ENCODE measurements at regions of chr10 and their contacts with region 1.

Region 1: DNA sequence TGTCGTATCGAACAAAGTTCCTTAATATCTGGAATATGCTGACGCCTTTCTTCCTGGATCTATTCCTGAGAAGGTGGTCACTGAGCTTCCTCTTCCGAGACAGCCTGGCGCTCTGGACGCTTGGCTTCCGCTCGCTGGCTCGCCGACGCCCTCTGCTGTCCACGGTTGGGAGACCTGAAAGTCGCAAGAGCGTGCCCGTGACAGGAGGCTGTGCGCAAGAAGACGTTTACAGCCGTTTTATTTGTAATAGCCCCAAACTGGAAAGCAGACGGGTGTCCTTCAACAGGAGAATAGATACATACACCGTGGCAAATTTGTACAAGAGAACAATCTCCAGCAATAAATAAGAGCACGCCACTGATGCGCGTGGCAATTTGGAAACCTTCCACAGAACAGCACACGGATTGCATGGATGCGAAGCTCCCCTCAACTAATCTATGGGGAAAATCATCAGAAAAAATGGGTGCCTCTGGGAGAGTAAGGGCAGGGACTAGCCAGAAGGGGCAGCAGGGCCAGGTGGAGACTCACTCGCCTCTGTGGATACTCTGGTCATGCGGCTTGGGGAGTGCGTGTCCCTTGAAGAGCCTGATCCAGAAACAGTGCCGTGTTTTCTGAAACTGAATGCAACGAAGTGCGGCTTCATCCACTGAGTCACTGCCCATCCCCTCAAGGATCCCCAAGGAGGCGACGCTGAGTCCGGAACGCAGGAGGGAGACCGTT is 41.5 kb upstream of the BNIP3 start:
- DNase-seq: peak; percentile 47
- H3K4me3 ChIP-seq: peak overlapping the region; percentile 48
- H3K27ac ChIP-seq: no peak overlapping the region
- H3K27me3 ChIP-seq: peaks cover 12% of the 10 kb centered on the region
- CTCF ChIP-seq: peak; percentile 97

Region 2: DNA sequence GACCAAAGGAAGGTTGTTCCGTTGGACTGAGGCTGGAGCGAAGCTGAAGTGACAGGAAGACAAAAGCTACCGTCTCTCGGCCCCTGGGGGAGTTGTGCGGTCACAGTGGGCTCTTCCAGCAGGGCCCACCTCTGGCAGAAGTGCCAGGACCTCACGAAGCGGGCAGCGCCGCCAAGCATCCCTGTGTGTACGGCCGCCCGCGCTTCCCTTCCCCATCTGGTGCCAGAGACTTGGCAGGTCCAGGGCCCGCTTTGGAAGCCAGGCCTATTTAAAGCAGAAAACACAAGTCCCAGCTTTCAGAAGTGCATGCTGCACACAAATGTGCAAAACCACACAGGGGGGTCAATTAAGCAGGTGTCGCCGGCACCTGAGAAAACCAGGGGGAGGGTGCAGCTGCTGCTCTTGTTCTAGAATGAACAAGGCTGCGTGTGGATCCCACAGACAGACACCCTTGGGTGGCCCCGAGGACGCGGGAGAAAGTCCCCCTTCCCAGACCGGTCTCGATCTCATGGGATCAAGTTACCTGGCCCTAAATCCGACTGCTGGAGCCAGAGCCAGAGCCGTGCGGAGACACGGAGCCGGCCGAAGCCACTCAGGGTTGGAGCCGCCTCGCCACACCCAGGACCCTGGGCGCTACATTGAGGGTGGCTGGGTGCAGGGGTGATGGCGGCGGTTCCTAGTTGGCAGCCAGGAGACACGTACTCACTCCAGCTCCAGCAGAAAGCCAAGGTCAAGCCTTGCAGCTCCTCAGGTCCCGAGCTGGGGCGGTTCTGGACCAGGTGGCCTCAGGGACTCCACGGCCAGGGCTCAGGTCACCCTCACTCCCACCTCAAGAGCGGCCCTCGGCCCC is 174.3 kb before region 1 on chr10:
- CTCF ChIA-PET with region 1: no interaction called
- POLR2A ChIA-PET with region 1: no interaction called
- DNase-seq: no peak
- H3K4me3 ChIP-seq: no peak overlapping the region
- H3K27ac ChIP-seq: no peak overlapping the region
- H3K27me3 ChIP-seq: no peaks in the 10 kb centered on the region
- CTCF ChIP-seq: no peak

Region 3: GRCh38 chr10:131885391-131886161 is 137.7 kb before region 1 on chr10:
- CTCF ChIA-PET with region 1: interaction called, 120 read pairs
- POLR2A ChIA-PET with region 1: interaction called, 6 read pairs
- DNase-seq: peak; percentile 13
- H3K4me3 ChIP-seq: no peak overlapping the region
- H3K27ac ChIP-seq: no peak overlapping the region
- H3K27me3 ChIP-seq: no peaks in the 10 kb centered on the region
- CTCF ChIP-seq: peak; percentile 93

Region 4: DNA sequence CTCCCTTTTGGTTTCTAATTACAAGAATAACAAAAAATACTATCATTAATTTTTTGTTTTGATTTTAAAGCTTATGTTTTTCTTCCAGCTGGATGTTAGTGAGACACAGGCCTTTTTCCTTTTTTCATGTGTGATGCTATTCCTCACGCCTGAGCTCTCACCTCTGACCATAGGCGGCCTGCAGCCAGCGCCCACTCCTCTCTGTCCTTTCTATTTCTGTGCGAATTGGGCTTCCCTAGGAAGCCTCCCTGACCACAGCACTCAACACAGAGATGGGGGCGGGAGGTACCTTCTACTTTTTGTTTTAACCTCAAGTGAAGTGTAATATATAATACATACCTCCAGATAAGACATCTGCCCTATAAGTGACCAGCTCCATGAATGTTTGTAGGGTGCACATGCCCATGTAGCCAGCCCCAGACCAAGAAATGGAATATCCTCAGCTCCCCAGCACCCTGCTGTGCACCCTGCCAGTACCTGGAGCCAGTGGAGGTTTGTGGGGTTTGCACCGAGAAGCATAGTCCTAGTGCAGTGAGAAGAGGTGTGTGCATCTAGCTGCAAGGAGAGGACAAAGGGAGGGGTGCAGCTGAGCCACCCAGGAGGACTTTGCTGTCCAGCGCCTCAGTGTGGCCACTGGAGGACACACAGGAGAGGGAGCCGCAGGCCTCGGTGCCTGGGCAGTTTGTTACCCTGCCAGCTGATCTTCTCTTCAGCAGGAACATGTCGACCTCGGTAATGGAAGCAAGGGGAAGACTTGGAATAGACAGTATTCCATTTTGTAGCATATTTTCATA is 80.0 kb before region 1 on chr10:
- CTCF ChIA-PET with region 1: interaction called, 20 read pairs
- POLR2A ChIA-PET with region 1: no interaction called
- DNase-seq: no peak
- H3K4me3 ChIP-seq: no peak overlapping the region
- H3K27ac ChIP-seq: no peak overlapping the region
- H3K27me3 ChIP-seq: no peaks in the 10 kb centered on the region
- CTCF ChIP-seq: peak; percentile 28; the same call in 1 of the 2 replicates

Region 5: DNA sequence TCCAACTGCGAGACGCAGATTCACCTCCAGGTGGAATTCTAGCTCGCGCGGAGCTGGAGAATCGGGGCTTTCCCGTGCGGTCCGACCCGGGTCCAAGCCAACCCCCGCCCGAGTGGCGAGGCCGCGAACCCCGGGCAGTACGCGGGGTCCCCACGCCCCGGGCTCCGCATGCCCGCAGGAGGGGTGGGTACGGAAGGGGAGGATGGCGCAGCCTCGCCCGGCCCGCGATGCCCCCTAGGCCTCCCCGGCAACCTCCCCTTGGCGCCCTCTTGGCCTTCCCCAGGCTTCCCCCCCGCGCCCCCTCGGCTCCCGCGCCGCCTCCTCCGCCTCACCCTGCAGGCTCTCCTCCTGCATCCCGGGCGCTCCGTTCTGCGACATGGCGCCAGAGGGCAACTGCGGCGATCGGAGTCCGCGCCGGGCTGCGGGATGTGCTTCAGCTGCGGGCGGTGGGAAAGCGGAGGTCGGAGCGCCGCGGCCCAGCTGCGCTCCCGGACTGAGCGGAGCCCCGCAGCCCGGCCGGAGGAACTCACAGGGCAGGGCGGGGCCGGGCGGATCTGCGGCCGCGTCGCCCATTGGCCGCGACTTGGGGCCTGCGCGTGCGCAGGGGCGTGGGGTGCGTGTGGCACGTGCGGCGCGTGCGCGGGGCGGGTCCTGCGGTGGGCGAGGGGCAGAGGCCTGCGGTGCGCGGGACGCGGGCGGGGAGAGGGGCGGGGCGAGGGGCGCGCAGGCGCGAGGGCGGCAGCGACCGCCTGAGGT is 41.6 kb before region 1 on chr10 and contains the start of gene BNIP3:
- CTCF ChIA-PET with region 1: interaction called, 30 read pairs
- POLR2A ChIA-PET with region 1: interaction called, 5 read pairs
- DNase-seq: peak; percentile 83
- H3K4me3 ChIP-seq: peak within 1 kb of the TSS; percentile 81
- H3K27ac ChIP-seq: peak within 1 kb of the TSS; percentile 52
- H3K27me3 ChIP-seq: no peaks in the 10 kb centered on the region
- CTCF ChIP-seq: peak; percentile 17; the same call in 1 of the 2 replicates
- polyA plus RNA-seq, gene BNIP3: 68.6 and 73.5 TPM in 2 replicates

Region 6: GRCh38 chr10:132011024-132011423 is 12.2 kb before region 1 on chr10:
- CTCF ChIA-PET with region 1: interaction called, 29 read pairs
- POLR2A ChIA-PET with region 1: no interaction called
- DNase-seq: no peak
- H3K4me3 ChIP-seq: no peak overlapping the region
- H3K27ac ChIP-seq: no peak overlapping the region
- H3K27me3 ChIP-seq: peaks cover 30% of the 10 kb centered on the region
- CTCF ChIP-seq: no peak

Region 7: DNA sequence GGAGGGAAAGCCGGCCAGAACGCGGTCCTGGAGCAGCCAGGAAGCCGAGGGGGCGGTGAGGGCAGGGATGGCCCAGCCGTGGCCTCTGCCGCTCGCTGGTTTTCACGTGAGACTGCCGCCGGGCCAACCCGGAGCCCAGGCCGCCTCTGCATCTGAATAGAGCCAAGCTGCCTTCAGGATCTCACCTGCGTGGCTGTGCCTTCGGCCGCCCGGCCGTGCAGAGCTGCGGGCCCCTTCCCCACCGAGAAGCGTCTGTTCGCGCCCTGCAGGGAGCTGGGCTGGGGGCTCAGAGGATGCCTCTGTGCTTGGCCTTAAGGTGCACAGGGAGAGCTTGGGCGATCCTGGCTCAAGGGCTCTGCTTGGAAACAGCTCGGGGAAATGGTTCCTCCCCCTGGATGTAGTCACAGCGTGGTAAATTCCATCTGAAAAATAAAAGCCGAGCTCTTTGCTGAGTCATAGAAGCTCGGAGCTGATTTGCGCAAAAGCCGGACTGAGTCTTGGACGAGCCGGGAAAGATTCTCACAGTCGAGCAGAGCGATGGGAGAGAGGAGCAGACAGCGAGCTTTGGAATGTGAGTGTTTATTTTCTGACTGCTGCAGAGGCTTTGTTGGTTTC is 42.3 kb after region 1 on chr10 and contains the start of gene JAKMIP3:
- CTCF ChIA-PET with region 1: interaction called, 12 read pairs
- POLR2A ChIA-PET with region 1: no interaction called
- DNase-seq: peak; percentile 91
- H3K4me3 ChIP-seq: peak within 1 kb of the TSS; percentile 69
- H3K27ac ChIP-seq: peak within 1 kb of the TSS; percentile 94
- H3K27me3 ChIP-seq: peaks cover 4% of the 10 kb centered on the region
- CTCF ChIP-seq: no peak
- polyA plus RNA-seq, gene JAKMIP3: 0.19 TPM in 2 replicates

Measured in AG04450 (cell line).